Sigmoid colon (tissue), 7 donors: ENCODE measurements at regions of chr17 and their contacts with region 1.

Region 1: DNA sequence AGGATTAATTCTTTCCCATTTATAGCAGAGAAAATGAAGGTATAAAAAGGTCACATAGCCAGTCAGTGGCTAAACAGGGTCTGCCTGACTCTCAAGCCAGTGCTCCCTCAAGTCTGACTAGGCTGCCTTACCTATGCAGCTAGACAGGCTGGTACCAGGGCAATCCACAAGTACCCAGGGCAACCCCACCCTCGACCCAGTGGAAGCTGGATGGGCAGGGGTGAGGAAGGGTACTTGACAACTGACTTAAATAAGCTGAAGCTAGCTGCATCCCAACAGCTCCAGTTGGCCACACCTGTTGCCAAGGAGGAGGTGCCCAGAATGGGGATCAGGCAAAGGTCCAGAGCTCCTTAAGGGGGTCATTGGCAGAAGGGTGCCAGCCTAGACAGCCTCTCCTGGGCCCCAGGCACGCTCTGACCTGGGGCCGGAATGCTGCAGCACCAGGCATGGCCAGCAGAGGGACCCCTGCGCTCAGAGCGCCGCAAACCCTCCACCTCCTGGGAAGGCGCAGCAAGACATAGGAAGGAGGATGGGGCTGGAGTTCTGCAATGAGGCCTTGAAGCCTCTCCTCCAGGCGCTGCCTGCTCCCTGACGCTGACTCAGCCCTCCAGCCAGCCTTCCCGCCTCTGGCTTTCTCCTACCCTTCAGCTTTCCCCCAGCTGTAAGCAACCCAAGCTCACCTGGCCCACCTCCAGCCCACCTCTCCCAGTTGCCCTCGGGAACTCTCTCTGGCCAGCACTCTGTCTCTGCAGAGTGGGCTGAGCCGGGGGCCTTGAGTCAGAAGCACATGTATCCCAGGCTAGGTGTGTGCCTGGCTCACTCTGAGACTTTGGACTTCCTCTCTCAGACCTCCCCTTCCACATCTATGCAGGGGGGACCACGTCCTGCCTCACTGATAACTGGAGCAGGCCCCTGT is 28.8 kb downstream of the MPP2 start:
- DNase-seq: peak; percentile 87
- H3K4me3 ChIP-seq: no peak overlapping the region
- H3K27ac ChIP-seq: peak overlapping the region in 2 of 4 donors; percentile 25 to 35
- H3K4me1 ChIP-seq: peaks cover 0 to 6% (median 4%) of the 10 kb centered on the region in 4 donors
- H3K27me3 ChIP-seq: no peaks in the 10 kb centered on the region
- CTCF ChIP-seq: peak; percentile 82 to 97 (median 89)
- EP300 ChIP-seq: no peak
- POLR2A ChIP-seq: no peak

Region 2: DNA sequence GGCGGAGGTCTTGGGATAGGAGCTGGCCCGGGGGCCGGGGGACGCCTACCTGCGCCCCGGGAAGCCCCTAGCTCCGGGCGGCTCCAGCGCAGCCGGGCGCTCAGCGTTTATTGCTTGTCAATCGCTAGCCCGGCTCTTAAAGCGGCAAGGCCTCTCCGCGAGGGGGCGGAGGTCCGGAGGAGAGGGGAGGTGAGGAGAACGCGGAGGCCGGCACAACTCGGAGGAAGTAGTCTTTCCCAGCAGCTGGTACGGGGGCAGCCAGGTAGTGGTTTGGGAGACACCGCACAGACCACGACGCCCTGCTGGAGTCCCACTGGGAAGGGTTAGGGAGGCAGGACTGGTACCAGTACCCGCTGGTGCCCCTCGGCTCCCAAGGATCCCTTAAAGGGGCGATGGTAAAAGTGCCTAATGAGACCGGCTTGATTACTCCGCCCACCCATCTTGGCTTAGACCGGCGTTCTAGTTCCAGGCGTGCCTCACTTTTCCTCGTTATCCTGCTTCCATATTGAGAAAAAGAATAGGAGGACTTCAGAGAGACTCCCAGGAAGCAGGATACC is 29.0 kb after region 1 on chr17 and contains the start of gene MPP2:
- intact Hi-C with region 1: loop called (anchors 5 kb)
- DNase-seq: peak; percentile 92
- H3K4me3 ChIP-seq: peak within 1 kb of the TSS; percentile 73 to 96 (median 92)
- H3K27ac ChIP-seq: peak within 1 kb of the TSS; percentile 95 to 99 (median 99)
- H3K4me1 ChIP-seq: peaks cover 0 to 34% (median 24%) of the 10 kb centered on the region in 4 donors
- H3K27me3 ChIP-seq: no peaks in the 10 kb centered on the region
- CTCF ChIP-seq: peak in 3 of 4 experiments; percentile 23 to 51 (median 31)
- EP300 ChIP-seq: no peak
- POLR2A ChIP-seq: peak; percentile 49 to 82
- total RNA-seq, gene MPP2: 10.9 to 33.0 (median 14.9) TPM

Region 3: GRCh38 chr17:43994272-43995149 is 116.0 kb after region 1 on chr17:
- intact Hi-C with region 1: loop called (anchors 2 kb)
- DNase-seq: peak; percentile 83
- H3K4me3 ChIP-seq: peak overlapping the region in 3 of 4 donors; percentile 16 to 35 (median 32)
- H3K27ac ChIP-seq: no peak overlapping the region
- H3K4me1 ChIP-seq: peaks cover 0 to 9% (median 8%) of the 10 kb centered on the region in 4 donors
- H3K27me3 ChIP-seq: peaks cover 0 to 22% (median 3%) of the 10 kb centered on the region in 3 donors
- CTCF ChIP-seq: peak; percentile 72 to 85 (median 76)
- EP300 ChIP-seq: no peak
- POLR2A ChIP-seq: no peak